Naive thymus-derived CD4-positive, alpha-beta T cell (primary cell): ENCODE measurements at regions of chr1 and their contacts with region 1.

Region 1: DNA sequence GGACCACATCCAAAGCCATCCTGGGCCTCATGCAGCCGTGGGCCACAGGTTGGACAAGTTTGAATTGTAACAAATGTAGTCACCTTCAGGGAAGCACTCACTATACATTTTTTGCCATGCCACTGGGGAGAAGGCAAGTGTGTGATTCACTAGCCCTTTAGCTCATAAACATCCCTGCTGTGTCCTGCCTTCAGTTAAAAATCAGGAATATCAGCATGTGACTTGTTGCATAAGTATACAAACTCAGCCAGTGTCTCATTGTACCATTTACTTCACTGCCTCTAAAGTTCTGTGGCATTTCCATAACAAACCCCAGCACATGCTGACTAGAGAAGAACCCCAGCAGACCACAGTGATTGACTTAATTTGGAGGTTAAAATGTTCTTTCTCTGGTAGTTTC is 142.0 kb upstream of the C1orf105 start:
- DNase-seq: no peak
- ATAC-seq: no peak
- H3K4me3 ChIP-seq: no peak overlapping the region
- H3K4me3 Mint-ChIP-seq: no peak overlapping the region
- H3K27ac ChIP-seq: no peak overlapping the region
- H3K27ac Mint-ChIP-seq: no peak overlapping the region
- H3K4me1 ChIP-seq: no peaks in the 10 kb centered on the region
- H3K4me1 Mint-ChIP-seq: peaks cover 0 to 16% (median 0%) of the 10 kb centered on the region in 7 donors
- H3K27me3 ChIP-seq: no peaks in the 10 kb centered on the region
- H3K27me3 Mint-ChIP-seq: no peaks in the 10 kb centered on the region

Region 2: DNA sequence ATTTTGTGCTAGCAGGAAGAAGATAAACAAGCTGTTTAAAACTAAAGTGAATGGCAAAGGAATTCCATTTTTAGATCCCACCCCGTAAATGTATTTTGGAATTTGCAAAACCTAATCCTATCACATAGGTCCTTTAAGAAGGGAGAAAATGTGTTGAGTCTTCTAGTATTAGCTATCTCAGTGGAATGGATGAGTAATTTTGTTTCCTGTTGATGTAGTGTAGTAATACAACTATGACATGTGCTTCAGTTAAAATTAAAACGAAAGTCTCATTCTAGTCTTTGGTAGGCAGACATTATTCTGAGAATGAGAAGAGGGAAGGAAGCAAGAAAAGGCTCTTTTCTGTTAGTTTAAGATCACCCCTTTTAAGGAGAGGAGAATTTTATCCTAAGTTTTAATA is 123.9 kb before region 1 on chr1:
- CTCF ChIA-PET with region 1: no interaction called
- POLR2A ChIA-PET with region 1: no interaction called
- intact Hi-C with region 1: loop called in 1 of 2 experiments (anchors 10 kb)
- DNase-seq: peak in 1 of 9 donors; percentile 3
- ATAC-seq: no peak
- H3K4me3 ChIP-seq: no peak overlapping the region
- H3K4me3 Mint-ChIP-seq: peak overlapping the region in 4 of 10 donors; percentile 2 to 61 (median 12)
- H3K27ac ChIP-seq: no peak overlapping the region
- H3K27ac Mint-ChIP-seq: peak overlapping the region in 8 of 9 donors; percentile 1 to 90 (median 36)
- H3K4me1 ChIP-seq: no peaks in the 10 kb centered on the region
- H3K4me1 Mint-ChIP-seq: peaks cover 4 to 8% (median 6%) of the 10 kb centered on the region in 7 donors
- H3K27me3 ChIP-seq: no peaks in the 10 kb centered on the region
- H3K27me3 Mint-ChIP-seq: no peaks in the 10 kb centered on the region

Region 3: GRCh38 chr1:172254521-172255222 is 23.8 kb before region 1 on chr1:
- CTCF ChIA-PET with region 1: no interaction called
- POLR2A ChIA-PET with region 1: no interaction called
- intact Hi-C with region 1: no loop called
- DNase-seq: no peak
- ATAC-seq: no peak
- H3K4me3 ChIP-seq: no peak overlapping the region
- H3K4me3 Mint-ChIP-seq: peak overlapping the region in 1 of 10 donors; percentile 30
- H3K27ac ChIP-seq: no peak overlapping the region
- H3K27ac Mint-ChIP-seq: peak overlapping the region in 4 of 9 donors; percentile 13 to 73 (median 24)
- H3K4me1 ChIP-seq: no peaks in the 10 kb centered on the region
- H3K4me1 Mint-ChIP-seq: peaks cover 2 to 22% (median 18%) of the 10 kb centered on the region in 7 donors
- H3K27me3 ChIP-seq: no peaks in the 10 kb centered on the region
- H3K27me3 Mint-ChIP-seq: no peaks in the 10 kb centered on the region